CD4-positive, alpha-beta memory T cell (primary cell): ENCODE measurements at regions of chr6 and their contacts with region 1.

Region 1: GRCh38 chr6:136792410-136793262 is at the start of gene MAP3K5:
- DNase-seq: peak; percentile 94 to 95 (median 94)
- H3K4me3 ChIP-seq: peak within 1 kb of the TSS; percentile 68 to 100
- H3K4me3 Mint-ChIP-seq: peak within 1 kb of the TSS; percentile 94 to 100 (median 97)
- H3K27ac ChIP-seq: peak within 1 kb of the TSS; percentile 99
- H3K27ac Mint-ChIP-seq: peak within 1 kb of the TSS; percentile 93 to 98 (median 97)
- H3K4me1 ChIP-seq: peaks cover 41% of the 10 kb centered on the region
- H3K4me1 Mint-ChIP-seq: peaks cover 22 to 49% (median 27%) of the 10 kb centered on the region in 4 donors
- H3K27me3 ChIP-seq: no peaks in the 10 kb centered on the region
- H3K27me3 Mint-ChIP-seq: no peaks in the 10 kb centered on the region
- total RNA-seq, gene MAP3K5: 31.4 to 31.7 TPM

Region 2: DNA sequence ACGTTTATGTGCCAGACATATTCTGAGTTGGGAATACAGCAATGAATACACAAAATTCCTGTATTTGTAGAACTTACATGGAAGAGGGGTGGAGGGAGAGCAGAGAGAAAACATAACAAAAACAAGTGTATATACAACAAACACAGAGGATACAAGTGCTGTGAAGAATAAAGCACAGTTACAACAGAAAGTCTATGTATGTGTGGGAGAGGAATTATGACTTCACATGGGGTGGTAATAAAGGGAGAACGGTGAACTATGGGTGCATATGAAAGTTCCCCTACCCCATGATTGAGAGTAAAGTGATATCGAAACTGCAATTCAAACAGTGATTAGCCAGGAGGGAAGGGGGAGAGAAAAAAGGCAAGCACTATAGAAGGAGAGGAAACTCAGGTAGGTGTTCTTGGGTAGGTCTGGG is 1762.6 kb before region 1 on chr6:
- CTCF ChIA-PET with region 1: no interaction called
- POLR2A ChIA-PET with region 1: no interaction called
- intact Hi-C with region 1: no loop called
- DNase-seq: peak in 4 of 5 donors; percentile 13 to 28 (median 19)
- H3K4me3 ChIP-seq: no peak overlapping the region
- H3K4me3 Mint-ChIP-seq: peak overlapping the region; percentile 10 to 76 (median 58)
- H3K27ac ChIP-seq: peak overlapping the region; percentile 47
- H3K27ac Mint-ChIP-seq: peak overlapping the region; percentile 36 to 91 (median 82)
- H3K4me1 ChIP-seq: peaks cover 34% of the 10 kb centered on the region
- H3K4me1 Mint-ChIP-seq: peaks cover 38 to 65% (median 41%) of the 10 kb centered on the region in 4 donors
- H3K27me3 ChIP-seq: no peaks in the 10 kb centered on the region
- H3K27me3 Mint-ChIP-seq: no peaks in the 10 kb centered on the region

Region 3: DNA sequence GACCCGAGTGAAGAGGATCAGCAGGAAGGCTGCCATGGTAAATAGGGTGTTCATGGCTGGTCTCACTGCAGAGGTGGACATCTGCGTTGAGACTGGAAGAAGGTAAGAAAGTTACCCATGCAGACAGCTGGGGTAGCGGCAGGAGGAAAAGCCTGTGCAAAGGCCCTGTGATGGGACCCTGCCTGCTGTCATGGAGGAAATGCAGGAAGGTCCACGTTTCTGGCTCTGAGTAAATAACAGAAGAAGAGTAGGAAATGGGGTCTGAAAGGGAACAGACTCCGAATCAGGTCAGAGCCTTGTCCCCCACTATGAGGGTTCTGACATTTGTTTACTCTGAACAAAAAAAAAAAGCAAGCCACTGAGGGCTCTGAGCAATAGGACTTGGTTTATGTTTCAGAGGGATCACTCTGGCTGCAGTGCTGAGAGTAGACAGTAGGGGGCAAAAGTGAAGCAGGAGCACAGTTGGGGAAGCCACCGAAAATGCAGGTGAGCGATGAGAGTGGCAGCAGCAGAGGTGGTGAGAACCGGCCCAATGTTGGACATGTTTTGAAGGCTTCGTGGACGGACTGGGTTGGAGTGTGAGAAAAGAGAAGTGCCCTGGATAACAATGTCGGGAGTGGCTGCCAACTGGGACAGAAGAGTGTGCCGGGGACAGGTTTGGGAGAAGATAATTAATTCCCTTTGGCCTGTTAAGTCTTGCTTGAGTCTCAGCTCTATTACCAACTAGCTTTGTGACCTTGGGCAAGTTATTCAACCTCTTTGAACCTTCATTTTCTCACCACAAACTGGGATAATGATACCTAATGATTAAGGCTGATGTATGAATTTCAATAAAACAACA is 184.5 kb before region 1 on chr6:
- CTCF ChIA-PET with region 1: interaction called, 33 read pairs
- POLR2A ChIA-PET with region 1: interaction called, 4 read pairs
- intact Hi-C with region 1: loop called (anchors 1 kb)
- DNase-seq: peak; percentile 70 to 76 (median 75)
- H3K4me3 ChIP-seq: no peak overlapping the region
- H3K4me3 Mint-ChIP-seq: no peak overlapping the region
- H3K27ac ChIP-seq: no peak overlapping the region
- H3K27ac Mint-ChIP-seq: peak overlapping the region in 5 of 7 donors; percentile 3 to 55 (median 11)
- H3K4me1 ChIP-seq: no peaks in the 10 kb centered on the region
- H3K4me1 Mint-ChIP-seq: peaks cover 8 to 24% (median 12%) of the 10 kb centered on the region in 4 donors
- H3K27me3 ChIP-seq: no peaks in the 10 kb centered on the region
- H3K27me3 Mint-ChIP-seq: no peaks in the 10 kb centered on the region

Region 4: DNA sequence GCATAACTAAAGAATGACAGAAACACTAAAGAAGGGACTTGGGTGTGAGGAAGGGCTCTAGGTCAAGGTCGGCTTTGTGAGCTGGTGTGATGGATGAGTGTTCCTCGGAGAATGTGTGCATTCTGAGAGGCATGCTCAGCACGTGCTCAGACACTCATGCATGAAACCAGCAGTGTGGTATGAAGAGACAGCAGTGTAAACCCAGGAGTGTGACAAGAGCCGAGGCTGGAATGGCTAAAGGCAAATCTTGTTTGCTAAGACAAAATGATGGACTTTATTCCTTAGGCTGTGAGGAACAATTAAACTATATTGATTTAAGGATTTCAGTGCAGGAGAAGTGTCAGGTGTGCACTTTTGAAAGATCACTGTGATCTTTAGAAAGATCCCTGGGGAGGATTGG is 135.0 kb before region 1 on chr6:
- CTCF ChIA-PET with region 1: interaction called, 747 read pairs
- POLR2A ChIA-PET with region 1: interaction called, 7 read pairs
- intact Hi-C with region 1: no loop called
- DNase-seq: no peak
- H3K4me3 ChIP-seq: no peak overlapping the region
- H3K4me3 Mint-ChIP-seq: no peak overlapping the region
- H3K27ac ChIP-seq: no peak overlapping the region
- H3K27ac Mint-ChIP-seq: peak overlapping the region in 2 of 7 donors; percentile 25 to 51
- H3K4me1 ChIP-seq: no peaks in the 10 kb centered on the region
- H3K4me1 Mint-ChIP-seq: peaks cover 0 to 5% (median 0%) of the 10 kb centered on the region in 4 donors
- H3K27me3 ChIP-seq: no peaks in the 10 kb centered on the region
- H3K27me3 Mint-ChIP-seq: no peaks in the 10 kb centered on the region

Region 5: GRCh38 chr6:136696238-136696637 is 96.4 kb before region 1 on chr6:
- CTCF ChIA-PET with region 1: interaction called, 50 read pairs
- POLR2A ChIA-PET with region 1: interaction called, 10 read pairs
- intact Hi-C with region 1: loop called (anchors 1 kb)
- DNase-seq: no peak
- H3K4me3 ChIP-seq: no peak overlapping the region
- H3K4me3 Mint-ChIP-seq: no peak overlapping the region
- H3K27ac ChIP-seq: no peak overlapping the region
- H3K27ac Mint-ChIP-seq: peak overlapping the region in 1 of 7 donors; percentile 6
- H3K4me1 ChIP-seq: peaks cover 13% of the 10 kb centered on the region
- H3K4me1 Mint-ChIP-seq: peaks cover 15 to 26% (median 18%) of the 10 kb centered on the region in 4 donors
- H3K27me3 ChIP-seq: no peaks in the 10 kb centered on the region
- H3K27me3 Mint-ChIP-seq: no peaks in the 10 kb centered on the region

Region 6: DNA sequence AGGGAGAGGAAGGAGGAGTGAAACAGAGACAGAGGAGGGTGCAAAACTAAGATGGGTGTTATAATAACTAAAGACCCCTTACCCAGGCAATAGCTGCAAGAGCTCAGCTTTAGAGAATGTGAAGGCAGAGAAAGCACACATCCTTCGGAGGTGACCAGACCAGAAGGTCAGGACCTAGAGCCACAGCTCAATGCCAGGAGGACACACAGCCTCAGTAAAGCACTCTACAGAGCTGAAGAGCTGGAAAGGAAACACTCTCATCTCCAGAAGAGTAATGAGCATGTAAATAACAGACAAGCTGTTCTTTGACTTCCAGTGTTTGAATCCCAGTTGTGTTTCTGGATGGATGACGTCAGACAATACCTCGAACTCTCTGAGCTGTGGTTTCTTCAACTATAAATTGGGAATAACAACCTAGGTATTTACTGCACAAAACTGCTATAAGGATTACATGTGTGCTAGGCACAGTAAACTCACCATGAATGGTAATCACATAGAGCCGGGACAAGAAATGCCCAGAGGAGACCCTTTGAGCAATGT is 63.6 kb before region 1 on chr6:
- CTCF ChIA-PET with region 1: interaction called, 139 read pairs
- POLR2A ChIA-PET with region 1: interaction called, 17 read pairs
- intact Hi-C with region 1: no loop called
- DNase-seq: no peak
- H3K4me3 ChIP-seq: no peak overlapping the region
- H3K4me3 Mint-ChIP-seq: no peak overlapping the region
- H3K27ac ChIP-seq: no peak overlapping the region
- H3K27ac Mint-ChIP-seq: peak overlapping the region in 1 of 7 donors; percentile 54
- H3K4me1 ChIP-seq: peaks cover 19% of the 10 kb centered on the region
- H3K4me1 Mint-ChIP-seq: peaks cover 41 to 61% (median 43%) of the 10 kb centered on the region in 4 donors
- H3K27me3 ChIP-seq: no peaks in the 10 kb centered on the region
- H3K27me3 Mint-ChIP-seq: no peaks in the 10 kb centered on the region

Region 7: DNA sequence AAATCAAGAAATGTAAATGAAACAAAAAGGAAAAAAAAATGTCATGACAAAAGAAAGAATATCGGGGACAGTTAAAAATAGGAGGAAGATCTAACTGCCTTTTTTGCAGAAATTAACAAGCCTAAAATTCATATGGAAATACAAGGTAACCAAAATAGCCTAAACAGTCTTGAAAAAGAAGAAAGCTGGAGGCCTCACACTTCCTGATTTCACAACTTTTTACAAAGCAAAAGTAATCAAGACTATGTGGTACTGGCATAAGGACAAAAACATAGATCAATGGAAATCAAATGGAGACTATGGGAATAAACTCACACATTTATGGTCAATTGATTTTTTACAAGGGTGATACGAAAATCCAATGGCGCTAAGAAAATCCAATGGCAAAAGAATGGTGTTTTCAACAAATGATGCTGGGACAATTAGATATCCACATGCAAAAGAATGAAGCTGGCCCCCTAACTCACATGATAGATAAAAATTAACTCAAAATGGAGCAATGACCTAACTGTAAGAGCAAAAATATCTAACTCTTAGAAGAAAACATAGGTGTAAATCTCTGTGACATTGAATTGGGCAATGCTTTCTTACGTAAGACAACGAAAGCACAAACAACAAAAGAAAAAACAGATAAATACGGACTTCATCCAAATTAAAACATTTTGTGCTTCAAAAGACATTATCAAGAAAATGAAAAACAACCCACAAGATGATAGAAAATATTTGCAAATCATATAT is 24.9 kb before region 1 on chr6:
- CTCF ChIA-PET with region 1: interaction called, 228 read pairs
- POLR2A ChIA-PET with region 1: interaction called, 323 read pairs
- intact Hi-C with region 1: loop called (anchors 1 kb)
- DNase-seq: no peak
- H3K4me3 ChIP-seq: no peak overlapping the region
- H3K4me3 Mint-ChIP-seq: peak overlapping the region in 7 of 8 donors; percentile 3 to 78 (median 68)
- H3K27ac ChIP-seq: peak overlapping the region; percentile 27
- H3K27ac Mint-ChIP-seq: peak overlapping the region; percentile 48 to 86 (median 76)
- H3K4me1 ChIP-seq: peaks cover 81% of the 10 kb centered on the region
- H3K4me1 Mint-ChIP-seq: peaks cover 65 to 83% (median 74%) of the 10 kb centered on the region in 4 donors
- H3K27me3 ChIP-seq: no peaks in the 10 kb centered on the region
- H3K27me3 Mint-ChIP-seq: no peaks in the 10 kb centered on the region